ENCODE measurements at regions of chr9 and their contacts with region 1.

Region 1: DNA sequence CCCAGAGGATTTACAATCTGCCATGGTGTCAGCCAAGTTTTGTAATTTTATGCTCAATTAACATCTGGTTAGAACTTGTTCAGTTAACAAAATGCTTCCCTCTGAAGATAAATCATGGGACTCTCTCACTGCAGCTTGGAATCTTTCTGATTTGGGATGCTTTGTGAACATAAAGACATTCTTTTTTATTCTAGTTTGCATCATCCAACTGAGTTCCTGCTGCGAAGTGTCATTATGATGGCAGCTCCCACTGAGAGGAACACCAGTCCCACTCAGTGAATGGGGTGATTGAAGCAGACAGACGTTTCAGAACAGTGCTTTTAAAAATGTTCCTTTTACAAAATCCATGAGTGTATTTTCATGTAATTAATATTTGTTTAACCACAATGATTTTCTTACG is 863.8 kb downstream of the TLE4 start:
- DNase-seq: no peak
- ATAC-seq: no peak
- H3K4me3 Mint-ChIP-seq: no peak overlapping the region
- H3K27ac Mint-ChIP-seq: no peak overlapping the region
- H3K4me1 Mint-ChIP-seq: peaks cover 9% of the 10 kb centered on the region
- H3K27me3 Mint-ChIP-seq: no peaks in the 10 kb centered on the region
- CTCF ChIP-seq: no peak

Region 2: DNA sequence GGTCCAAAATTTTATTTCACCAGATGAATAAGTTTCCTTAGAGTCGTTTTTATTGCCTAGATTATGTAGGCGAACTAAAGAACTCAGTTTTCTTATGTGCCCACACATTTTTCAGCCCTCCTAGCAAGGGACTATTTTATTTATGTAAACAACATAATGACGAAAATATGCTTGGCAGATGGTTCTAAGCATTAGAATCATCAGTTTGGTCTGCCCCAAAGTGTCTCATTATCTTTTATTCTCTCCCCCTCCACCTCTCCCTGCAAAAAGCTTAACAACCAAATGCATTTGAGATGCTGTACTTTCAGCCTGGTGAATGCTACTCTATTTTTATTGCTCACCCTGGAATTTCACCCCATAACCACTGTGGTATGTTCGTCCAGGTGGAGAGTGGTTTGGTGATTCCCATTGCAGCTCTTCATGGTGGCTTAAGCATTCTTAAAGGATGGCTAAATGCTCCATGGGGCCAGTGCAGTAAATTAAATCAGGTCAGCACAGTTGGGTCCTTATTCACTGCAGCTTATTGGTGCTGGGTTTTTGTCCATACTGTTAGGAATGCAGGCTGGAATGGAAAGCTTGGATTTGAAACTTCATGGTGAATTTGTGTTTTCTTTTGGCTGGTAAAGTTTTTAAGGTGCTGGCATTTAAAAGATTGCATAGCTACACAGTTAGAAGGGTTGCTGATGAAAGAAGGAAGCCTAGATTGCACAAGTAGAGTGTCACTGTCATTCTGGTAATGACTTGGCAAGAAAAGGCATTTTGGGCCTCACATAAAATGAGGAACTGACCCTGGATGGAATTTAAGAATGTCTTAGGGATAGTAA is 824.6 kb before region 1 on chr9:
- CTCF ChIA-PET with region 1: no interaction called
- POLR2A ChIA-PET with region 1: no interaction called
- intact Hi-C with region 1: no loop called
- DNase-seq: no peak
- ATAC-seq: peak; percentile 83
- H3K4me3 Mint-ChIP-seq: no peak overlapping the region
- H3K27ac Mint-ChIP-seq: peak overlapping the region; percentile 53
- H3K4me1 Mint-ChIP-seq: peaks cover 57% of the 10 kb centered on the region
- H3K27me3 Mint-ChIP-seq: no peaks in the 10 kb centered on the region
- CTCF ChIP-seq: no peak

Region 3: DNA sequence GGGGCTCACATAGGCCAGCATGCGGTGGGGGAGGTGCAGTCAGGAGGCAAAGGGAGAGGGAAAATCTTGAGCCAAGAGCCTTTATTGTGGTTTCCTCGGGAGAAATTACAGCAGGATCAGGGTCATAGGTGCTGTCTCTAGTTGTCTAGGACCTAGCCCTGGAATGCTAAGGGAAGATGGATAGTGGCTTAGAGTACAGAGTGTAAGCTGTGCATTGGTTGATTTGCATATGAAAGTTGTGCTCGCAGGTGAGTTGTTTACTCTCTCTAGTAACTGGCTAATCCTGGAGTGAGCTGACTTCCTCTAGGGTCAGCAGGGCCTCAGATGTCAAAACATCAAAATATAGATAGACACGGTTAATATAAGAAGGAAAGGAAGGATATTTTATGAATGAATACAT is 13.9 kb after region 1 on chr9:
- CTCF ChIA-PET with region 1: no interaction called
- POLR2A ChIA-PET with region 1: no interaction called
- intact Hi-C with region 1: no loop called
- DNase-seq: no peak
- ATAC-seq: no peak
- H3K4me3 Mint-ChIP-seq: no peak overlapping the region
- H3K27ac Mint-ChIP-seq: no peak overlapping the region
- H3K4me1 Mint-ChIP-seq: no peaks in the 10 kb centered on the region
- H3K27me3 Mint-ChIP-seq: no peaks in the 10 kb centered on the region
- CTCF ChIP-seq: no peak

Region 4: DNA sequence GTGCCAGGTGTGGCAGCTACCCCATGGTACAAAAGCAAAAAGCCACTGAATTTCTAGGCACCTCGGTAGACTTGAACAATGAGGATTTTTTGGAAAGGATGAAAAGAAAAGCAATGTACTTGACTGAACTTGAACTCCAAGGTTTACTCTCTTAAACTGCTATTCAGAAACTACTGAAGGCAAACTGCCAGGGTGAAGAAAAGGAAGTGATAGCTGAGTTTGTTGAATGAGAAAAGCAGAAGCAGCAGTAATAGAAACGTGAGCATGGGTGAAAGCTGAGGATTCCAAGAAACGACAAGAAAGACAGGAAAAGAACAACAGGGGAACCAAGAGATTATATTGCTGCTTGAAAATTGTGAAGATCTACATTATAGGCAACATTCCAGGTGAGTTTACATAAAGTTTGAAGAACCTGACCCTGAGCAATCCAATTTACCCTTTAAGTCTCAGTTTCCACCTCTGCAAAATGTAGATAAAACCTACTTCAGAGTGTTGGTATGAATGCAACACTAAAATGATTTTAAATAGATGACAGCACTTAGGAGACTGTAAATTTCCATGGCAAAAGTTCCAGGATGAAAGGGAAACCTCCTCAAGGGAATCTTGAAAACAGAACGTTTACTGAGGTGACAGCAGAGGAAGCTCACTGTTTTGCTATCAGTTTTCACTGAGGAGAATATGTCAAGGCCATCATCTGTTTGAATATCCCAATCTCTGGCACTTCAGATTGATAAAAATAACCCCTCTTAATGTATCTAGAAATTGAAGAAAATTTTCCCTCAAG is 1798.8 kb after region 1 on chr9:
- CTCF ChIA-PET with region 1: no interaction called
- POLR2A ChIA-PET with region 1: no interaction called
- intact Hi-C with region 1: loop called (anchors 10 kb)
- DNase-seq: no peak
- ATAC-seq: no peak
- H3K4me3 Mint-ChIP-seq: no peak overlapping the region
- H3K27ac Mint-ChIP-seq: no peak overlapping the region
- H3K4me1 Mint-ChIP-seq: peaks cover 8% of the 10 kb centered on the region
- H3K27me3 Mint-ChIP-seq: no peaks in the 10 kb centered on the region
- CTCF ChIP-seq: no peak